Endothelial cell of umbilical vein (primary cell): ENCODE measurements at regions of chr2 and their contacts with region 1.

Region 1: GRCh38 chr2:133213651-133214050 is 354.6 kb downstream of the NCKAP5 start:
- DNase-seq: peak; percentile 63
- H3K4me3 ChIP-seq: peak overlapping the region in 1 of 3 experiments; percentile 15
- H3K27ac ChIP-seq: peak overlapping the region; percentile 52
- H3K4me1 ChIP-seq: peaks cover 16% of the 10 kb centered on the region
- H3K27me3 ChIP-seq: no peaks in the 10 kb centered on the region
- CTCF ChIP-seq: no peak
- POLR2A ChIP-seq: no peak

Region 2: GRCh38 chr2:132766573-132766972 is 447.1 kb before region 1 on chr2:
- CTCF ChIA-PET with region 1: no interaction called
- POLR2A ChIA-PET with region 1: no interaction called
- dilution Hi-C with region 1: no loop called
- intact Hi-C with region 1: no loop called
- DNase-seq: no peak
- H3K4me3 ChIP-seq: no peak overlapping the region
- H3K27ac ChIP-seq: no peak overlapping the region
- H3K4me1 ChIP-seq: no peaks in the 10 kb centered on the region
- H3K27me3 ChIP-seq: no peaks in the 10 kb centered on the region
- CTCF ChIP-seq: no peak
- POLR2A ChIP-seq: no peak

Region 3: DNA sequence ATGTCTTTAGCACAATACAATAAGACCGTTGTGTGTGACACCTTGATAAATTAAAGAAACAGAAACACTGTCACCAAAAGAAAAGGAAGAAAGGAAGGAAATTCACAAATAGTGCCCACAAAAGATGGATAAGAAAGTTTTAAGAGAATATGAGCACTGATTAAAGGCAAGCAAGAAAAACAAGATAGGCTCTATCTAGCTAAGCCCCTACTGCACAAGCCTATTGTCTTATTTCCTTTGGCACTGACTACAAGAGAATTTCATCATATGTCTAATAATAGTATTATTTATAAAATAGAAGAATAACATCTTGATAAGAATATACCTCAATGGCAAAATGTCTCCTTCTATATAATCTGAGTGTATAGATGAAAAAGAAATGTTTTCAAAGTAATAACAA is 18.9 kb after region 1 on chr2:
- CTCF ChIA-PET with region 1: interaction called, 3 read pairs
- POLR2A ChIA-PET with region 1: no interaction called
- dilution Hi-C with region 1: no loop called
- intact Hi-C with region 1: loop called (anchors 2 kb)
- DNase-seq: peak; percentile 86
- H3K4me3 ChIP-seq: no peak overlapping the region
- H3K27ac ChIP-seq: peak overlapping the region; percentile 67
- H3K4me1 ChIP-seq: peaks cover 27% of the 10 kb centered on the region
- H3K27me3 ChIP-seq: no peaks in the 10 kb centered on the region
- CTCF ChIP-seq: no peak
- POLR2A ChIP-seq: no peak